Gastrocnemius medialis (tissue), 4 donors: ENCODE measurements at regions of chr12 and their contacts with region 1.

Region 1: GRCh38 chr12:106282457-106283097 is 20.0 kb upstream of the TCP11L2 start:
- DNase-seq: peak in 1 of 2 donors; percentile 28
- ATAC-seq: peak; percentile 36 to 79
- H3K4me3 ChIP-seq: no peak overlapping the region
- H3K27ac ChIP-seq: no peak overlapping the region
- H3K4me1 ChIP-seq: peaks cover 0 to 5% of the 10 kb centered on the region in 2 donors
- H3K27me3 ChIP-seq: no peaks in the 10 kb centered on the region
- CTCF ChIP-seq: peak; percentile 66 to 75 (median 70)
- POLR2A ChIP-seq: no peak

Region 2: DNA sequence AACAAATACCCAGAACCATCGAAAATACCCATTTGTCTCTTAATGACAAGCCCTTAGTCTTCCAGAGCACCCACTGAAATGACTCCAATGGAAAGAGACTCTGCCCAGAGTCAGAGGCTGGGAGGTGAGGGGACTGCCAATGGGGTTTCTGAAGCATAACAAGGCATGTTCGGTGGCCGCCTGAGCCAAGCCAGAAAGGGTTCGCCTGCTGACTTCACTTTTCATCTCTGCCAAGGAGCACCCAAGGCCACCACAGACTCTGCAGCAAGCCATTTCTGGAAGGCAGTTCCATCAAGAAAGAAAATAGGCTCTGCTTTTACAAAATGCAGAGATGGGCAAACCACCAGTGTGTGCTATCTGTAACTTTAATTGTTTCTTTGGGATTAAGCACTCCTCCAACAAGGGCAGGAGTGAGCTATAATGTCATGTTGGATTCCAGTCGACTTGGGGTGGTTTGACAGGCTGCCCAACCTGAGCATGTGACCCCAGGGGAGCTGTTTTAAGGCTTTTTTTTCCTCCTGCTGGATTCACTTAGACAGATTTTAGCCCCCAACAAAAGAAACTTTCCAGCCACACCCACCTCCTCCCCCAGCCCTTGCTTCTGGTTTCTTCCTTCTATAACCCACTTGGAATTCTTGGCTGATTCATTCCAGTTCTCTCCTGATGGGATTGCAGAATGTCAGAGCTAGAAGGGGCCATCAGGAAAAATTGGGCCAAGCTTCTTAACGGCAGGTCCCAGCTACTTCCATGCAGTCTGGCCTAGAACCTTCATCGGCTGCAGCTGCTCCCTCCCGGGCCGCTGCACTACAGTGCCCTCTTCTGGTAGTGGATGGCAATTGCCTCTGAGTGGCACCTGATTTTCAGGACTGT is 58.9 kb before region 1 on chr12:
- in situ Hi-C with region 1: loop called in 3 of 4 experiments (anchors 5 to 10 kb)
- intact Hi-C with region 1: loop called (anchors 1 kb)
- DNase-seq: peak; percentile 45 to 65
- ATAC-seq: peak; percentile 57 to 75
- H3K4me3 ChIP-seq: no peak overlapping the region
- H3K27ac ChIP-seq: no peak overlapping the region
- H3K4me1 ChIP-seq: peaks cover 8 to 17% of the 10 kb centered on the region in 2 donors
- H3K27me3 ChIP-seq: no peaks in the 10 kb centered on the region
- CTCF ChIP-seq: peak; percentile 82 to 97 (median 91)
- POLR2A ChIP-seq: no peak

Region 3: GRCh38 chr12:106235770-106236169 is 46.8 kb before region 1 on chr12:
- in situ Hi-C with region 1: no loop called
- intact Hi-C with region 1: no loop called
- DNase-seq: no peak
- ATAC-seq: no peak
- H3K4me3 ChIP-seq: no peak overlapping the region
- H3K27ac ChIP-seq: no peak overlapping the region
- H3K4me1 ChIP-seq: no peaks in the 10 kb centered on the region
- H3K27me3 ChIP-seq: no peaks in the 10 kb centered on the region
- CTCF ChIP-seq: no peak
- POLR2A ChIP-seq: no peak

Region 4: GRCh38 chr12:106581543-106582248 is 299.1 kb after region 1 on chr12:
- in situ Hi-C with region 1: no loop called
- intact Hi-C with region 1: no loop called
- DNase-seq: no peak
- ATAC-seq: no peak
- H3K4me3 ChIP-seq: peak overlapping the region; percentile 32 to 55 (median 43)
- H3K27ac ChIP-seq: no peak overlapping the region
- H3K4me1 ChIP-seq: peaks cover 7 to 36% of the 10 kb centered on the region in 2 donors
- H3K27me3 ChIP-seq: peaks cover 77 to 88% (median 78%) of the 10 kb centered on the region in 3 donors
- CTCF ChIP-seq: no peak
- POLR2A ChIP-seq: no peak